Vagina (tissue), 2 donors: ENCODE measurements at regions of chr19 and their contacts with region 1.

Region 1: DNA sequence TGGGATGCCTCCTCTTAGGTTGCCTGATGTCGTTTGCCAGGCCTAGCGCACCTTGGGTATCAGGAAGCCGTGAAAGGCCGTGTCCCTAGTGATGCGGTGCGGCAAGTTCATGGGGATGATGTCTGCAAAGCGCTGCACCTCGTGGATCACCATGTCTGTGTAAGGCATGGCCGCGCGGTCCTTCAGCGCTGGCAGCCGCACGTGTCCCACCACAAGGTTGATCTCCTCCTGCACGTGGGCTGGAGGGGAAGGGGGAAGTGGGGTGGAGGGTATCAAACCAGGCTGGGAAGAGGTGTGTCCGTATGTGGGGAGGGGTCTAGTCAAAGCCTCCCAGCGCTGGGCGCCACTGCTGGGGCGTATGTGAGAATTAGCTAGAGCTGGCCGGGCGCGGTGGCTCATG is 23.2 kb downstream of the EGLN2 start:
- DNase-seq: peak in 1 of 2 donors; percentile 83
- H3K4me3 ChIP-seq: no peak overlapping the region
- H3K27ac ChIP-seq: no peak overlapping the region
- H3K4me1 ChIP-seq: peaks cover 21% of the 10 kb centered on the region
- H3K27me3 ChIP-seq: no peaks in the 10 kb centered on the region
- CTCF ChIP-seq: no peak
- POLR2A ChIP-seq: no peak

Region 2: DNA sequence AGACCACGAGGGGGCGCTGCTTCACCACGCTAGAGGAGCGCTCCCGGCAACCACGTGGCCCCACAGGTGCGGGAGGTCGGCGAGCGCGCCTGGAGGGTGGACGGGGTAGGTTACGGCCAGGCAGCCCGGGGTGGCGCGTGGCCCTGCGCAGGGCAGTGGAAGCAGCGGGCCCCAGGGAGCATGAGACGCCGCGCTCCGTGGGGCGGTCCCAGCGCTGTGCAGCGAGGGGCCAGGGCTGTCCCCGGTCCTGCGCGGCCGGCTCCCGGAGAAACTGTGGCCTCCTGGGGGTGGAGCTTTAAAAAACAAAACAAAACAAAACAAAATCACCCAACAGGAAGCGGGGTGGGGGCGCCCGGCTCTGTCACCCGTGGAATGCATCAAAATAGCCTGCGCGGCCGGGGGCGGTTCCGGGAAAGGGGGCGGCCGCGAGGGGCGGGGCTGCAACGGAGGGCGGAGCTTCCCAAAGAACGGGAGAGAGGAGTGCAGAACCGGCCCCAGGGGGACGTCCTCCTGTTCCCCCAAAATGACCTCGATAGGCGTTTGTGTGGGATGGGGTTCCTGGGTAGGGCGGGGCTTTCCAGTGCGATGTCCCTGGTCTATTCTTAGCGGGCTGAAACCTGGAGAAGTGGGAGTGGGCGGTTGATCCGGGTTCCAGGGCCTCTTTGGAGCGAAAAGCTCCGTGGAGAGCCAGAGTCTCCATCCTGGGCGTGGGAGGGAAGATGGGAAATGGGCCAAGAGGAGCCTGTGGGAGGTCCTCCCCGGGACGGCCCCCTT is 159.1 kb before region 1 on chr19:
- intact Hi-C with region 1: loop called (anchors 5 kb)
- DNase-seq: peak in 1 of 2 donors; percentile 95
- H3K4me3 ChIP-seq: peak overlapping the region; percentile 49 to 71
- H3K27ac ChIP-seq: peak overlapping the region; percentile 93
- H3K4me1 ChIP-seq: peaks cover 47% of the 10 kb centered on the region
- H3K27me3 ChIP-seq: no peaks in the 10 kb centered on the region
- CTCF ChIP-seq: peak in 2 of 3 experiments; percentile 96 to 97
- POLR2A ChIP-seq: peak in 1 of 2 donors; percentile 28

Region 3: DNA sequence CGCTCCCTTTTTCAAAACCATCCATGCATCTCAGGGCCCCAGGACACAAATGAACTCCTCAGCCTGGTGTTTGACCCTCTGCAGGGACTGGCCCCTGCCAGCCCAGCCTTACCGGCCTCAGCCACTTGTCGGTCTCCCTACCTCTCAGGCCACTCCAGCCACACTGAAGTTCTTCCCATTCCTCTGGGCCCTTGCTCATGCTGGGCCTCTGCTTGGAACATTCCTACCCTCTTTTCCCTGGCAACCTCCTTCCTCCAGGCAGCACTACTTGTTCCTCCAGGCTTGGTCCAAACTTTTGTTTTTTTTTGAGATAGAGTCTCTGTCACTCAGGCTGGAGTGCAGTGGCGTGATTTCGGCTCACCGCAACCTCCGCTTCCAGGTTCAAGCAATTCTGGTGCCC is 30.8 kb before region 1 on chr19:
- intact Hi-C with region 1: no loop called
- DNase-seq: no peak
- H3K4me3 ChIP-seq: no peak overlapping the region
- H3K27ac ChIP-seq: no peak overlapping the region
- H3K4me1 ChIP-seq: no peaks in the 10 kb centered on the region
- H3K27me3 ChIP-seq: no peaks in the 10 kb centered on the region
- CTCF ChIP-seq: no peak
- POLR2A ChIP-seq: no peak